Activated CD4-positive, alpha-beta T cell treated with anti-CD3 and anti-CD28 coated beads for 36 hours (primary cell): ENCODE measurements at regions of chr3 and their contacts with region 1.

Region 1: GRCh38 chr3:126703512-126704462 is at the start of gene CHCHD6:
- DNase-seq: peak; percentile 98
- ATAC-seq: peak; percentile 99
- H3K4me3 Mint-ChIP-seq: peak within 1 kb of the TSS; percentile 92
- H3K27ac Mint-ChIP-seq: peak within 1 kb of the TSS; percentile 82
- H3K4me1 Mint-ChIP-seq: peaks cover 23% of the 10 kb centered on the region
- H3K27me3 Mint-ChIP-seq: peaks cover 9% of the 10 kb centered on the region
- total RNA-seq, gene CHCHD6: 17.1 to 17.7 TPM

Region 2: DNA sequence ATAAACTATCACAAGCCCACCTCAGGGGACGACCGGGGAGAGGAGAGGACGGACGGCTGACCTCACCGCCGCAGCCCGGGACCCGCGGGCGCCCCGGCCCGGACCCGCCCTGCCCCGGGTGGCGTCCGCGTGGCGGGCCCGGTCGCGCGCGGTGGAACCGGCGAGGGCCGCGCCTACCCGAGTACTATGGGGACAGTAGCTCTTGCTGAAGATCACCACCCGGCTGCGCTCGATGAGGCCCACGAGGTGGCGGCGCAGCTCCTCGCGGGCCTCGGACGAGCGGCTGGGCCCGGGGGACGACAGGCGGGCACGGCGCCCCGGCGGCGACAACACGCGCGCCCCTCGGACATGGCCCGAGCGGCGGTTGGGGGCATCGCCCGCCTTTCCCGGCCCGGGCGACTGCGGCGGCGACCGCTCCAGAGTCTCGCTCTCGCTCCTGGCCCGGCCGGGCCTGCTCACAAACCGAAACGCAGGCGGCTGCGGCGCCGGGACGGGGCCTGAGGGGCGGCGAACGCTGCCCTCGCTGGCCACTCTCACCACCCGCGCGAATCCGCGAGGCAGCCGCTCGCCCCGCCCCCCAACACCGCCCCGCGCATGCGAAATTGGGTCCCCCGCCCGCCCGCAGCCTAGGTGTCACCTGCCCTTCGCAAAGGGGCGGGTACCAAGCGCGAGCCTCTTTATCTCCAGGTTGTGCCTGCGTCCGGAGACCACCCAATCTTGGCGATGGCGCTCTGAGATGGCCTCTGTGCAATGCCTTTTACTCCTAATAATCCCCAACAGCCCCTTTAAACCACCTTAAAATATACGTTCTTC is 49.0 kb before region 1 on chr3 and contains the start of gene TXNRD3:
- CTCF ChIA-PET with region 1: no interaction called
- POLR2A ChIA-PET with region 1: no interaction called
- intact Hi-C with region 1: loop called in 1 of 2 experiments (anchors 1 kb)
- DNase-seq: peak; percentile 87
- ATAC-seq: peak; percentile 95
- H3K4me3 Mint-ChIP-seq: peak within 1 kb of the TSS; percentile 74
- H3K27ac Mint-ChIP-seq: peak within 1 kb of the TSS; percentile 60
- H3K4me1 Mint-ChIP-seq: peaks cover 6% of the 10 kb centered on the region
- H3K27me3 Mint-ChIP-seq: peaks cover 5% of the 10 kb centered on the region
- total RNA-seq, gene TXNRD3: 2.5 to 3.5 TPM

Region 3: GRCh38 chr3:126765187-126766069 is 61.6 kb after region 1 on chr3:
- CTCF ChIA-PET with region 1: no interaction called
- POLR2A ChIA-PET with region 1: no interaction called
- intact Hi-C with region 1: no loop called
- DNase-seq: no peak
- ATAC-seq: no peak
- H3K4me3 Mint-ChIP-seq: no peak overlapping the region
- H3K27ac Mint-ChIP-seq: no peak overlapping the region
- H3K4me1 Mint-ChIP-seq: no peaks in the 10 kb centered on the region
- H3K27me3 Mint-ChIP-seq: no peaks in the 10 kb centered on the region

Region 4: GRCh38 chr3:126911162-126912026 is 207.6 kb after region 1 on chr3:
- CTCF ChIA-PET with region 1: no interaction called
- POLR2A ChIA-PET with region 1: no interaction called
- intact Hi-C with region 1: loop called in 1 of 2 experiments (anchors 1 kb)
- DNase-seq: peak; percentile 81
- ATAC-seq: peak; percentile 96
- H3K4me3 Mint-ChIP-seq: peak overlapping the region; percentile 24
- H3K27ac Mint-ChIP-seq: peak overlapping the region; percentile 86
- H3K4me1 Mint-ChIP-seq: peaks cover 33% of the 10 kb centered on the region
- H3K27me3 Mint-ChIP-seq: no peaks in the 10 kb centered on the region